SK-N-SH (cell line): ENCODE measurements at regions of chr1 and their contacts with region 1.

Region 1: DNA sequence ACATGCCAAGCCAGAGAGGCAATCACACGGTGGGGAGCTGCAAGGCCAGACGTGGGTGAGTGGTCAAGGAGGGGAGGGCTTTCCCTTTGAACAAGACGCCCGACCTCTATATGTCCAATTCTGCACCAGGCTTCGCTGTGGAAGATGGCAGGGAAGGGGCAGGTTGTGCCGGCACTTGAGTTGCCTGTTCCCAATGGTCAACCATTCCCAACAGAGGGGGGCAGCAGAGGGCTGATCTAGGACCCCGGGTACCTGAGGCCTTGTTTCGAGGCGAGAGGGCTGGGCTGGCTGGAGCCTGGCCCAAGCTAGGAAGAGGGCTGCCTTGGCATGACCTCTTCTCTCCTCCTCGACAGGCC is 64.9 kb downstream of the TMEM53 start:
- DNase-seq: peak; percentile 76
- H3K4me3 ChIP-seq: no peak overlapping the region
- H3K27ac ChIP-seq: no peak overlapping the region
- H3K4me1 ChIP-seq: peaks cover 0 to 3% of the 10 kb centered on the region in 2 experiments; a peak in 2 of 4 replicates
- H3K27me3 ChIP-seq: no peaks in the 10 kb centered on the region
- CTCF ChIP-seq: peak; percentile 59
- EP300 ChIP-seq: no peak
- RAD21 ChIP-seq: peak; percentile 78

Region 2: GRCh38 chr1:44423591-44424537 is 185.5 kb before region 1 on chr1:
- CTCF ChIA-PET with region 1: no interaction called
- POLR2A ChIA-PET with region 1: no interaction called
- DNase-seq: no peak
- H3K4me3 ChIP-seq: peak overlapping the region in 1 of 2 experiments; percentile 16; a peak in 1 of 4 replicates
- H3K27ac ChIP-seq: no peak overlapping the region
- H3K4me1 ChIP-seq: peaks cover 0 to 6% of the 10 kb centered on the region in 2 experiments; a peak in 1 of 4 replicates
- H3K27me3 ChIP-seq: peaks cover 76% of the 10 kb centered on the region
- CTCF ChIP-seq: no peak
- EP300 ChIP-seq: no peak
- RAD21 ChIP-seq: no peak

Region 3: GRCh38 chr1:44645476-44646244 is 36.3 kb after region 1 on chr1:
- CTCF ChIA-PET with region 1: interaction called, 150 read pairs
- POLR2A ChIA-PET with region 1: no interaction called
- DNase-seq: no peak
- H3K4me3 ChIP-seq: no peak overlapping the region
- H3K27ac ChIP-seq: no peak overlapping the region
- H3K4me1 ChIP-seq: peaks cover 0 to 49% of the 10 kb centered on the region in 2 experiments; a peak in 1 of 4 replicates
- H3K27me3 ChIP-seq: no peaks in the 10 kb centered on the region
- CTCF ChIP-seq: no peak
- EP300 ChIP-seq: no peak
- RAD21 ChIP-seq: no peak

Region 4: GRCh38 chr1:44894591-44894990 is 285.2 kb after region 1 on chr1:
- CTCF ChIA-PET with region 1: no interaction called
- POLR2A ChIA-PET with region 1: no interaction called
- DNase-seq: no peak
- H3K4me3 ChIP-seq: no peak overlapping the region
- H3K27ac ChIP-seq: peak overlapping the region; percentile 61 to 89; a peak in 3 of 4 replicates
- H3K4me1 ChIP-seq: peaks cover 0 to 11% of the 10 kb centered on the region in 2 experiments; a peak in 1 of 4 replicates
- H3K27me3 ChIP-seq: no peaks in the 10 kb centered on the region
- CTCF ChIP-seq: no peak
- EP300 ChIP-seq: peak in 1 of 2 experiments; percentile 77; a peak in 1 of 4 replicates
- RAD21 ChIP-seq: no peak